Left lung (tissue), 14 donors: ENCODE measurements at regions of chr15 and their contacts with region 1.

Region 1: DNA sequence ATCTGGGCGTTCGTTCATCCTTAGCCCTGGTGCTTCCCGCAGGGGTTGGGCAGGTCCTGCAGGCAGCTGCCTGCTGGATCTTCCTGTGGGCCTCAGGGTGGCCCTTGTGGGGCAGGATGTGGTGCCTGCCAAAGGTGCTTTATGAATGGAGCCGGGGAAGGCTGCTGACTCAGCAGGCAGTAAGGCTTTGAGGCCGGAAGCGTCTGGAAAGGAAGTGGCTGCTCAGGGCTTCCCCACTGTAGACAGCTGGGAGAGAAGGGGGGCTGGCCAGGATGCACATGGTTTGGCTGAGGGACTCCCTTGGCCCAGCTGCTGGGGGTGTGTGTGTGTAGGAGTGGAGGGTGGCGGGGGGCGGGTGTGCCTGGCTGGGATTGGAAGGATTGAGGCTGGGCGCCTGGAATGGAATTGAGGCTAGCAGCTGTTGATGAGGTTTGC is 12.9 kb downstream of the CD276 start:
- DNase-seq: peak; percentile 87 to 97 (median 90)
- ATAC-seq: peak; percentile 89
- H3K4me3 ChIP-seq: no peak overlapping the region
- H3K27ac ChIP-seq: peak overlapping the region; percentile 33 to 53
- H3K4me1 ChIP-seq: peaks cover 10 to 41% of the 10 kb centered on the region in 2 donors
- H3K27me3 ChIP-seq: peaks cover 0 to 7% of the 10 kb centered on the region in 2 donors
- CTCF ChIP-seq: no peak

Region 2: GRCh38 chr15:73424506-73424905 is 272.5 kb before region 1 on chr15:
- intact Hi-C with region 1: no loop called
- DNase-seq: no peak
- ATAC-seq: no peak
- H3K4me3 ChIP-seq: no peak overlapping the region
- H3K27ac ChIP-seq: no peak overlapping the region
- H3K4me1 ChIP-seq: no peaks in the 10 kb centered on the region
- H3K27me3 ChIP-seq: peaks cover 0 to 15% of the 10 kb centered on the region in 2 donors
- CTCF ChIP-seq: no peak

Region 3: DNA sequence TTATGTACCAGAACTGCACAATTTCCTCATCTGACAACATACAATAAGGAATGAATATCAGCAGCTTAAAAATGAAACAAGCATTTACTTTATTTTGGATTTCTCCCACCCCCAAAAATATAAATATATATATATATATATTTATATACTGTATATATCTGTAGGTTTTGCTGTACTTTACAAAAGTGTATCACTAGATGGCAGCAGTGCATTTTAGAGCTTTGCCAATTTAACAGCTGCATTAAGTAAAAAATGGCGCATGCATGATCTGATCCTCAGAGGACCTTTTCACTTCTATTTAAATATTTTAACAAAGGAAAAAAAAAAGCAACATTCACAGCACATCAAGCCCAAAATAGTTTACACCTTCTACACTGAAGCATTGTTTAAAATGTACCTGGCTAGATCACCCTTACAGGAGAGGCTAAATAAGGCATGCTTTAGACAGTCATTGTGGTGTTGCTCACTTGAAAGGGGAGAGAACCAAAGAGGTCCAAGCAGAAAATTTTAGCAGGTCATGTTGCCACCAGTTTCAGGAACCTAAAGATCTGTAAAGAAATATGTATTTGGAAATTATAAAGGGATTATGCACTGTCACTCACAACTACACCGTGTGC is 136.4 kb before region 1 on chr15:
- intact Hi-C with region 1: loop called in 1 of 2 experiments (anchors 10 kb)
- DNase-seq: peak in 2 of 4 donors; percentile 67 to 84
- ATAC-seq: peak; percentile 77
- H3K4me3 ChIP-seq: no peak overlapping the region
- H3K27ac ChIP-seq: no peak overlapping the region
- H3K4me1 ChIP-seq: peaks cover 0 to 14% of the 10 kb centered on the region in 2 donors
- H3K27me3 ChIP-seq: no peaks in the 10 kb centered on the region
- CTCF ChIP-seq: peak in 1 of 2 donors; percentile 41